GM12878 (cell line): ENCODE measurements at regions of chr7 and their contacts with region 1.

Region 1: GRCh38 chr7:114630201-114630990 is 215.8 kb downstream of the FOXP2 start:
- DNase-seq: no peak
- ATAC-seq: peak; percentile 63
- H3K4me3 ChIP-seq: no peak overlapping the region
- H3K27ac ChIP-seq: no peak overlapping the region
- H3K4me1 ChIP-seq: no peaks in the 10 kb centered on the region
- H3K27me3 ChIP-seq: no peaks in the 10 kb centered on the region
- CTCF ChIP-seq: no peak
- EP300 ChIP-seq: no peak
- POLR2A ChIP-seq: no peak
- RAD21 ChIP-seq: no peak

Region 2: DNA sequence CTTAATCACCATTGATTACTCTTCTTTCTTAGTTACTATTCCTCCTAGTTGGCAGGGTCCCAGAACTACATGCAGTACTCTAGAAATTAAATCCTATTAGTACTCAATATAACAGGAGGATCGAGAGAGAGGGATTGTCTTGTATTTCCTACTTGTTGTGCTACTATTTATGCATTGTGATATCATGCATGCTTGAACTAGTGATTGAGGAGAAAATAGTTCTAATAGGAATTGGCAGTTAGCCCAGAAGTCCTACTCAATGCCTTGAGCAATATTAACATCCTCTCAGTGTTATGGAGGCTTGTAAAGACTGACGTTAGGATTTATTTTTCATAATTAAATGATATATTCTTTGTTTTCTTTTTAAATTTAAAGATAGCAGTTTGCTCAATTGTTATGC is 148.4 kb before region 1 on chr7:
- CTCF ChIA-PET with region 1: no interaction called
- POLR2A ChIA-PET with region 1: no interaction called
- RAD21 ChIA-PET with region 1: no interaction called
- SMC1A ChIA-PET with region 1: no interaction called
- in situ Hi-C with region 1: no loop called
- intact Hi-C with region 1: no loop called
- DNase-seq: no peak
- ATAC-seq: no peak
- H3K4me3 ChIP-seq: no peak overlapping the region
- H3K27ac ChIP-seq: no peak overlapping the region
- H3K4me1 ChIP-seq: no peaks in the 10 kb centered on the region
- H3K27me3 ChIP-seq: no peaks in the 10 kb centered on the region
- CTCF ChIP-seq: no peak
- EP300 ChIP-seq: no peak
- POLR2A ChIP-seq: no peak
- RAD21 ChIP-seq: no peak

Region 3: DNA sequence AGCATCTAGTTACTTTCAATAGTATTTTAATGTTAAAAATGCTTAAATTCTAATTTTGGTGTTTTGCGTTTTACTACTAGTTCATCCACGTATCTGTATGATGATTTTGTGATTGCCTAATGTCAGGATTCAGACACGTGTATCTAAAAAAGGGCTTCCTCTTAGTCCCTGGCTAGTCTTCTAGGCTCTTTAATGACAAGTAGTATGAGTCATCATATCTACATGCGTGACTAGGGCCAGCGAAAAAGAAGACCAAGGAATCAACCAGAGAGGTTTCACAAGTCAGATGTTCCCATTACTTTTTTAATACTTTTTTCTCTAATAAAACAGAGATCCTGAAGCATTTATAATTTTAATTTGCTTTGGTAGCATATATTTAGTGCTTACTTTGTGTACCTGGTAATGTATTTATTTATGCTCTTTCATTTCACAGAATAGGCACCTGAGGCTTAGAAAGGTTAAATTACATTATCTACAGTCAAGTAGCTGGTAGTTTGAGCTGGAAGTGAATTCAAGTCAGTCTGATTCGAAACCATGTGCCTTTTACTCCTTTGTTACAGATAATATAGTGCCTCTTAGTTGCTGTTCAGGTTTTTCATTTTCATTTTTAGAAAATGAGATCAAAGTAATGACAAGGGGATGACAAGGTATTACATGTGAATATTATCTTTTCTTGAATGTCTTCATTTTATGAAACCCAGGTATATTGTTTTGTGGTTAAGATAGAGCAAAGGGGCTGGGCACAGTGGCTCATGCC is 75.4 kb before region 1 on chr7:
- CTCF ChIA-PET with region 1: no interaction called
- POLR2A ChIA-PET with region 1: no interaction called
- RAD21 ChIA-PET with region 1: no interaction called
- SMC1A ChIA-PET with region 1: interaction called, 4 read pairs
- in situ Hi-C with region 1: no loop called
- intact Hi-C with region 1: loop called (anchors 5 kb)
- DNase-seq: peak; percentile 41
- ATAC-seq: peak; percentile 91
- H3K4me3 ChIP-seq: no peak overlapping the region
- H3K27ac ChIP-seq: peak overlapping the region; percentile 54
- H3K4me1 ChIP-seq: no peaks in the 10 kb centered on the region; the same call in 1 of the 2 replicates
- H3K27me3 ChIP-seq: no peaks in the 10 kb centered on the region
- CTCF ChIP-seq: no peak
- EP300 ChIP-seq: peak; percentile 8 to 66; a peak in 1 of 4 replicates
- POLR2A ChIP-seq: no peak
- RAD21 ChIP-seq: 0 out of 2 replicates have a peak, but pooled peaks have one; percentile 1

Region 4: DNA sequence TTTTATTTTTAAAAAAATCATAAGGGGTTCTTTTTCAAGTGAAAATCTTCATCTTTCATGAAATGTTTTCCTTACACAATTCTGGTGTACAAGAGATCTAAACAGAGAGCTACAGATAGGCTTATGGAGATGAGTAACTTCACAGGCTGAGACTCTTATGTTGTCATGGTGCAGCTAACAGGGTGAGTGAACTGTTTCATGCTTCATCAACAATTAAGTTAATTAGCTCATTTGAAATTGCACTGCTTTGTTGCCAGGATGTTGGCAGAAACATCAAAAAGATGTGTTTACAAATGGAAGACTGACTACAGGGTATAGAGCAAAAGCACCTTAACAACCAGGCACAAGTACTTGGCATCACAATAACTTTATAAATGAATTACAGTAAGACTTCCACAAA is 15.1 kb after region 1 on chr7:
- CTCF ChIA-PET with region 1: interaction called, 5 read pairs
- POLR2A ChIA-PET with region 1: interaction called, 11 read pairs
- RAD21 ChIA-PET with region 1: interaction called, 6 read pairs
- SMC1A ChIA-PET with region 1: interaction called, 20 read pairs
- in situ Hi-C with region 1: no loop called
- intact Hi-C with region 1: no loop called
- DNase-seq: no peak
- ATAC-seq: peak; percentile 75
- H3K4me3 ChIP-seq: no peak overlapping the region
- H3K27ac ChIP-seq: no peak overlapping the region
- H3K4me1 ChIP-seq: no peaks in the 10 kb centered on the region
- H3K27me3 ChIP-seq: no peaks in the 10 kb centered on the region; a peak in 1 of 4 replicates
- CTCF ChIP-seq: no peak
- EP300 ChIP-seq: no peak
- POLR2A ChIP-seq: no peak
- RAD21 ChIP-seq: no peak

Region 5: GRCh38 chr7:114818501-114818900 is 188.1 kb after region 1 on chr7:
- CTCF ChIA-PET with region 1: no interaction called
- POLR2A ChIA-PET with region 1: no interaction called
- RAD21 ChIA-PET with region 1: no interaction called
- SMC1A ChIA-PET with region 1: no interaction called
- in situ Hi-C with region 1: no loop called
- intact Hi-C with region 1: no loop called
- DNase-seq: no peak
- ATAC-seq: no peak
- H3K4me3 ChIP-seq: no peak overlapping the region
- H3K27ac ChIP-seq: no peak overlapping the region
- H3K4me1 ChIP-seq: no peaks in the 10 kb centered on the region
- H3K27me3 ChIP-seq: no peaks in the 10 kb centered on the region
- CTCF ChIP-seq: no peak
- EP300 ChIP-seq: no peak
- POLR2A ChIP-seq: no peak
- RAD21 ChIP-seq: no peak

Region 6: GRCh38 chr7:114922016-114922651 is 291.7 kb after region 1 on chr7 and contains the start of gene MDFIC:
- CTCF ChIA-PET with region 1: no interaction called
- POLR2A ChIA-PET with region 1: no interaction called
- RAD21 ChIA-PET with region 1: no interaction called
- SMC1A ChIA-PET with region 1: interaction called, 6 read pairs
- in situ Hi-C with region 1: no loop called
- intact Hi-C with region 1: loop called (anchors 5 kb)
- DNase-seq: no peak
- ATAC-seq: peak; percentile 65
- H3K4me3 ChIP-seq: peak within 1 kb of the TSS; percentile 85
- H3K27ac ChIP-seq: peak within 1 kb of the TSS; percentile 92
- H3K4me1 ChIP-seq: peaks cover 20% of the 10 kb centered on the region
- H3K27me3 ChIP-seq: no peaks in the 10 kb centered on the region
- CTCF ChIP-seq: peak in 2 of 3 experiments; percentile 6 to 8; a peak in 1 of 6 replicates
- EP300 ChIP-seq: no peak
- POLR2A ChIP-seq: peak; percentile 90
- RAD21 ChIP-seq: no peak
- polyA plus RNA-seq, gene MDFIC: 11.5 to 16.1 TPM